PC-3 (cell line): ENCODE measurements at regions of chr10 and their contacts with region 1.

Region 1: DNA sequence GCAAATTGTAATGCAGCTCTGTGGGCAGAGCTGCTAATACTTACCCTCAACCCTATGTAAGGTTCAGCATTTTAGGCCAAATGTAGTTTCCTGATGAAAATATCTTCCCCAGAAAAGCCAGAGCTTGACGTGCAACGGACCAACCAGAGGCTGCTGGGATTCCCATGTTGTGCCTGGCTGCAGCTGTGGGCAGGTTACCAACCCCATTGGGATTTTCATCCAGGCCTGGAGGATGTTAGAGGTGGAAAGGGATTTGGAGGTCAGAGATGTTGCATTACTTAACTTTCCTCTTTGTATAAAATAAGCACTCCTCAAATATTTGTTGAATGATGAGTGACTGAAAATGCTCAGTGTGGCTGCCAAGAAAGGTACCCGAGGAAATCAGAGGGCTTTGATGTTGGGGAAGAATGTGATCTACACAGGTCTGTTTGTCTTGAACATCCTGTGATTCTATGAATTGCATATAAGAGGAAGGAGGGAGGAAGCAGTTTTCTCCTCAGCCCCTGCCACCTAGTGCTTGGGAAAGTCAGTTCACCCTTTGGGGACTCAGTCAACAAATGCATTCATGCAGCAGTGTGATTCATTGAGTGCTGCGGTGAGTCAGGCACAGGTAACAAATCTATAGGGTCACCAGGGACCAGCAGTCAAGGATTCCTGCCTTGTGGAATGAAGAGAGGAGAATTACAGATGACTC is 487.2 kb downstream of the RPS24 start:
- DNase-seq: peak; percentile 100
- ATAC-seq: peak; percentile 100
- H3K4me3 ChIP-seq: no peak overlapping the region
- H3K27ac ChIP-seq: peak overlapping the region; percentile 42
- H3K4me1 ChIP-seq: peaks cover 31% of the 10 kb centered on the region
- H3K27me3 ChIP-seq: no peaks in the 10 kb centered on the region
- CTCF ChIP-seq: peak; percentile 99

Region 2: DNA sequence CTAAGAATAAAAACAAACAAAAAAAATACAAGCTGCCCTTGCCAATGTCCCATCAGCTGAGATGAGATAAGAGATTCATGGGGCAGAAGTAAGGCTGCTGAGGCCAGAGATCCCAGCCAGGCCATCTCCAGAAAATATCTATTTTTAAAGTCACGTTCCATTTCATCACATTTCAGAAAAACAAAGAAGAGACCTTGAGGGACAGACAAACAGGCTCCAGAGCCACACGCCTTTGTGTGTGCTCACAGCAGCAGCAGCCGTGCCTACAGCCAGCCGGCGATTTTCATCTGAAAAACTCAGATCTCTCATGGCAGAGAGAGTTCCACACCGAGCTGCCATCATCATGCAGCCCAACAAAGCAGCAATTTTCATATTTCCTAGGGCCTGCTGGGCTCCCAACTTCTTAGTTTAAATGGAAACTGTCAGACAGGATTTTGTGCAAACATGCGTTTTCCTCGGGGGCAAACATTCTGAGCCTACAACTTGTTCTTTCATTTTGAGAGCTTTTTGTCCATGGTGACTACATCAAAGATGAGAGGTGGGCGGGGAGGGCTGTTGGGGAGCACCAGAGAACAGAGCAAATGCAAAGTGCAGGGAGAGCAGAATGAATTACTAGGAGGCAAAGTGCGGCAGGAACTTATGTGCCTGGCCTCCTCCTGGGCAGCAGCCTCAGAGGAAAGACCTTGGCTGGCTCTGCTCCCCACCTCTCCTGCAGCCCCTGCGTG is 633.1 kb before region 1 on chr10:
- CTCF ChIA-PET with region 1: no interaction called
- POLR2A ChIA-PET with region 1: no interaction called
- intact Hi-C with region 1: no loop called
- DNase-seq: peak; percentile 42
- ATAC-seq: no peak
- H3K4me3 ChIP-seq: no peak overlapping the region
- H3K27ac ChIP-seq: no peak overlapping the region
- H3K4me1 ChIP-seq: peaks cover 30% of the 10 kb centered on the region
- H3K27me3 ChIP-seq: no peaks in the 10 kb centered on the region
- CTCF ChIP-seq: no peak

Region 3: GRCh38 chr10:78211561-78212051 is 309.3 kb before region 1 on chr10:
- CTCF ChIA-PET with region 1: no interaction called
- POLR2A ChIA-PET with region 1: no interaction called
- intact Hi-C with region 1: loop called (anchors 1 kb)
- DNase-seq: peak; percentile 92
- ATAC-seq: peak; percentile 66
- H3K4me3 ChIP-seq: no peak overlapping the region
- H3K27ac ChIP-seq: no peak overlapping the region
- H3K4me1 ChIP-seq: no peaks in the 10 kb centered on the region
- H3K27me3 ChIP-seq: peaks cover 69% of the 10 kb centered on the region
- CTCF ChIP-seq: peak; percentile 100

Region 4: GRCh38 chr10:78302989-78303854 is 217.7 kb before region 1 on chr10:
- CTCF ChIA-PET with region 1: no interaction called
- POLR2A ChIA-PET with region 1: no interaction called
- intact Hi-C with region 1: loop called (anchors 1 kb)
- DNase-seq: peak; percentile 100
- ATAC-seq: peak; percentile 91
- H3K4me3 ChIP-seq: peak overlapping the region; percentile 67
- H3K27ac ChIP-seq: peak overlapping the region; percentile 11
- H3K4me1 ChIP-seq: peaks cover 14% of the 10 kb centered on the region
- H3K27me3 ChIP-seq: peaks cover 36% of the 10 kb centered on the region
- CTCF ChIP-seq: peak; percentile 93

Region 5: GRCh38 chr10:78424719-78425118 is 96.2 kb before region 1 on chr10:
- CTCF ChIA-PET with region 1: interaction called, 3 read pairs
- POLR2A ChIA-PET with region 1: no interaction called
- intact Hi-C with region 1: loop called (anchors 1 kb)
- DNase-seq: peak; percentile 92
- ATAC-seq: peak; percentile 98
- H3K4me3 ChIP-seq: no peak overlapping the region
- H3K27ac ChIP-seq: no peak overlapping the region
- H3K4me1 ChIP-seq: no peaks in the 10 kb centered on the region
- H3K27me3 ChIP-seq: peaks cover 35% of the 10 kb centered on the region
- CTCF ChIP-seq: peak; percentile 99

Region 6: DNA sequence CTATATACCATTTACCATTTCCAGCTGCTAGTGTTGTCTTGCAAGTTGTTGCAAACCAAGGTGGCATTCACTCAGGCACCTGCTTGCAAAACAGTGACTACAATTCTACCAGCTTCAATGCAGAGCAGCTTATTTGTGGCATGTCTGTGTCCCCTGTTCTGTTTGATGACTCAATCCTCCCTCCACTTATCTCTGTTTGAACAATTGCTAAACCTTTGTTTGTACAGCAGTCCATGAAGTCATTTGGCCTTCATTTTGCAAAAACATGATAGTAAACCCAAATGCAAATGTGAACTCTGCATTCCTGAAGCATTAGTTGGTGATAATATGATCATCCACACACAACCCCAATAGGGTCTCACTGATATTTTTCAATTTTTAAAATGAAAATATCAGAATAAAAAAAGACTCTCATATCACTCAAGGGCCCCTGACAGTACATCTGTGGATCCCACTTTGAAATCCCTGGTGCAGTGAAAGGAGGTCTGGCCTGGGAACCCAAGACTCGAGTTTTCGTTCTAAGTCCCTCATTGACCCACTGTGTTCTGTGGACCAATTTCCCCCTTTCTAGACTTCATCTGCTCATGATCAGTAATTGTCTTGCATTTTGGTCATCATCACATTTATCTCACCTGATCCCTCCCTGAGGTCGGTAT is 61.8 kb before region 1 on chr10:
- CTCF ChIA-PET with region 1: no interaction called
- POLR2A ChIA-PET with region 1: no interaction called
- intact Hi-C with region 1: loop called (anchors 1 kb)
- DNase-seq: peak; percentile 100
- ATAC-seq: peak; percentile 91
- H3K4me3 ChIP-seq: peak overlapping the region; percentile 6; the same call in 1 of the 2 replicates
- H3K27ac ChIP-seq: peak overlapping the region; percentile 85
- H3K4me1 ChIP-seq: peaks cover 57% of the 10 kb centered on the region
- H3K27me3 ChIP-seq: no peaks in the 10 kb centered on the region
- CTCF ChIP-seq: no peak

Region 7: GRCh38 chr10:78664929-78665553 is 144.2 kb after region 1 on chr10:
- CTCF ChIA-PET with region 1: no interaction called
- POLR2A ChIA-PET with region 1: no interaction called
- intact Hi-C with region 1: no loop called
- DNase-seq: peak; percentile 98
- ATAC-seq: peak; percentile 86
- H3K4me3 ChIP-seq: no peak overlapping the region
- H3K27ac ChIP-seq: no peak overlapping the region
- H3K4me1 ChIP-seq: no peaks in the 10 kb centered on the region
- H3K27me3 ChIP-seq: peaks cover 34% of the 10 kb centered on the region
- CTCF ChIP-seq: peak; percentile 100